CD4-positive, alpha-beta T cell (primary cell): ENCODE measurements at regions of chr19 and their contacts with region 1.

Region 1: DNA sequence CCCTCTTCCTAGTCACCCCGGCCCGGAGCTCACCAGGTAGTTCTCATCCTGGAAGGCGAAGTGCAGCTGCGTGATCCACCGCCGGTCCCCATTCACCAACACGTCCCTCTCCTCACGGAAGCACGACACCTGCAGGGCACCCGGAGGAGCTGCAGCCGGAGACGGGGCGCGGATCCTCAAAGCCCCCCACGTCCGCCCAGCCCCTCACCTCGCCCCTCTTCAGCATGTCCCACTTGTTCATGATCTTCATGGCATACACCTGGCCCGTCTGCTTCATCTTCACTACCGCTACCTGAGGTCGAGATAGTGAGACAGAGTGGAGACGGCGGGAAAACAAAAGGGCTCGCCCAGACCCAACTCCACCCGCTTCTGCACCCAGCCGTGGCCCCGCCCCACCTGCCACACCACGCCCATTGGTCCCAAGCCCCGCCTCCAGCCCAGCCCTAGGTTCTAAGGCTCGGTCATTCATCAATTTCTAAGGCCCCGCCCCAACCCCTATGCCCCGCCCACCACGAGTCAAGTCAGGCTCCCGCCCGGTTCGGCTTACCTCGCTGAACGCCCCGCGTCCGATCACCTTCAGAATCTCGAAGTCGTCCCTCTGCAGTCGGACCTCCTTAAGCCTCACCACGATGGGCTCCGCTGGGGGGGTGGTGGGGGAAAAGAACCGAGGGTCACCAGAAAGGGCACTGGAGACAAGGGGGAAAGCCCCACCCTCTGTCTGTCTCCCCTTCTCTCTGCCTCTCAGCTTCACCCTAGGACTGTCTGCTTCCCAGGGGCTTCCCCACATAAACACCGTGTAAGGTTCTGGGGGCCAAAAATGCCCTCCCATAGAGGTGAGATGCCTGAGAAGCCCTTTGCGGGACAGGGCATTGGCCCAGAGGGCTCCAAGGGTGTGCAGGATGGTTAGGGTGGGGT is 2.8 kb downstream of the DMPK start:
- DNase-seq: peak; percentile 61 to 88 (median 76)
- ATAC-seq: peak; percentile 89
- H3K4me3 ChIP-seq: peak overlapping the region; percentile 38
- H3K4me3 Mint-ChIP-seq: peak overlapping the region; percentile 77
- H3K27ac ChIP-seq: no peak overlapping the region
- H3K27ac Mint-ChIP-seq: no peak overlapping the region
- H3K4me1 ChIP-seq: peaks cover 24% of the 10 kb centered on the region
- H3K4me1 Mint-ChIP-seq: peaks cover 23% of the 10 kb centered on the region
- H3K27me3 ChIP-seq: peaks cover 22 to 39% of the 10 kb centered on the region in 2 experiments
- H3K27me3 Mint-ChIP-seq: peaks cover 34% of the 10 kb centered on the region
- CTCF ChIP-seq: peak; percentile 78

Region 2: GRCh38 chr19:45798995-45799517 is 19.6 kb after region 1 on chr19:
- CTCF ChIA-PET with region 1: interaction called, 172 read pairs
- POLR2A ChIA-PET with region 1: interaction called, 3 read pairs
- intact Hi-C with region 1: no loop called
- DNase-seq: peak in 13 of 14 experiments; percentile 33 to 82 (median 52)
- ATAC-seq: peak; percentile 96
- H3K4me3 ChIP-seq: no peak overlapping the region
- H3K4me3 Mint-ChIP-seq: no peak overlapping the region
- H3K27ac ChIP-seq: no peak overlapping the region
- H3K27ac Mint-ChIP-seq: no peak overlapping the region
- H3K4me1 ChIP-seq: peaks cover 7% of the 10 kb centered on the region
- H3K4me1 Mint-ChIP-seq: peaks cover 11% of the 10 kb centered on the region
- H3K27me3 ChIP-seq: peaks cover 28 to 33% of the 10 kb centered on the region in 2 experiments
- H3K27me3 Mint-ChIP-seq: peaks cover 39% of the 10 kb centered on the region
- CTCF ChIP-seq: peak; percentile 91